Common myeloid progenitor, CD34-positive (primary cell): ENCODE measurements at regions of chr10 and their contacts with region 1.

Region 1: GRCh38 chr10:17375936-17376584 is 78.3 kb downstream of the ST8SIA6 start:
- DNase-seq: peak in 2 of 3 donors; percentile 19 to 20
- H3K4me3 ChIP-seq: no peak overlapping the region
- H3K27ac ChIP-seq: no peak overlapping the region
- H3K4me1 ChIP-seq: no peaks in the 10 kb centered on the region
- H3K27me3 ChIP-seq: no peaks in the 10 kb centered on the region

Region 2: DNA sequence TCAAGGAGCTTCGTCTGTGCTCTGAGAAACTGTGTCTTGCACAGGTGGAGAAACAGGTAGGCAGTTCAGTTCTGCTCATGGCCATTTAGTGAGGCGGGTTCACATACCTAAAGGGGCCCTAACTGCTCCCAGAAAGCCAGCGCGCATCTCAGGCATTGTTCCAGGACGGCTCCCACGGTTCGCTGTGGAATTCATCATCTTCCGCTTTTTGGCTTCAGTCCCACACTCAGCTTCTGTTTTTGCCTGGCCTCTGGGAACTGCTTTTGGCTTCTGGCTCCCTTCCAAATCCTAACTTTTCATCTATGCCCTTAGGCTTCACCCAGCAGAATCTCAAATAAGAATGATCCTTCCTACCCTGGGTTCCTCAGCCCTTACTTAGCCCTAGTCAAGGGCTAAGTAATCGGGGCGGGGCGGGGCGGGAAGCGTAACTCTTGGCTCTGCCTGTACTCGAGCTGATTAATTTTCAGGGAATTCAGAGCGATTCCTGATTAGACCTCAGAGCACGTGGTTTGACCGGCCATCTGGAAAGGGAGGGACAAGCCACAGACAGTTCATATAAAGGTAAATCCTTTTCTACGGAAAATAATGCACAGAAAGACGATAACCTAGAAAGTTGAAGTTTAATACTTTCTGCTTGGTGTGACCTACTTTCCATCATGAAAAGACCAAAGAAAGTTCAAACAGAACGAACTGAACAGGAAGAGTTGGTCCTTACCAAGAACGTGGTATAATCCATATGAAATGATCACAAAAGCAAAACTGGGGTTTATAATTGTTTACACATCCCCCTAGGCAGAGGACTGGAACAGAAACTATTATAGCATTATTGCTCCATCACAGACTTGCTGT is 27.3 kb before region 1 on chr10:
- CTCF ChIA-PET with region 1: no interaction called
- POLR2A ChIA-PET with region 1: no interaction called
- DNase-seq: no peak
- H3K4me3 ChIP-seq: no peak overlapping the region
- H3K27ac ChIP-seq: no peak overlapping the region
- H3K4me1 ChIP-seq: no peaks in the 10 kb centered on the region
- H3K27me3 ChIP-seq: no peaks in the 10 kb centered on the region

Region 3: DNA sequence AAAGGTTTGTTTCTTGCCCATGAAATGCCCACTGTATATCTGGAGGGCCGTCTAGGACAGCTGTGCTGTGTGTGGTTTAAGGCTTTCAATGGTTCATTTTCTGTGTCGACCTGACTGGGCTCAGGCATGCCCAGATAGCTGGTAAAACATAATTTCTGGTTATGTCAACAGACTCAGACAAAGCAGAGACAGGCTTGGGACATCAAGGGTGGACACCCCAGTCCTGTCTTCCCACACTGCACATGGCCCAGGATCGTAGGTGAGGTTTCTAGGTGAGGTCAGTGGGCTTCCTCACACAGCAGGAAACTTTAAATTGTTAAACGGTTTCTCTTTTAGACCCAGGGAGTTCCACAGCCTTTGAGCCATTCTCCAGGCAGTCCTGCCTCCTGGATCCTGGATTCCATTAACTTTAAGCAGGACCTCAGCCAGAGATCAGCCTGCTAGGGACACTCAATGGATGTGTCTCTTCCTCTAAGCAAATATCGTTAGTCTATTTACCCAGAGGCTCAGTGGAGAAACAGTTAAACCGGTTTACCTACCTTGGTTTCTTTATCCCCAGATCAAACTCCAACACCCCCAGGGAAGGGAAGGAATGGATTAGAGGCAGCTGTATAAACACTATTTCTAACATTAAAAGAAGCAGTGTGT is 11.9 kb after region 1 on chr10:
- CTCF ChIA-PET with region 1: interaction called, 11 read pairs
- POLR2A ChIA-PET with region 1: no interaction called
- DNase-seq: no peak
- H3K4me3 ChIP-seq: no peak overlapping the region
- H3K27ac ChIP-seq: peak overlapping the region in 1 of 2 experiments; percentile 19
- H3K4me1 ChIP-seq: no peaks in the 10 kb centered on the region
- H3K27me3 ChIP-seq: no peaks in the 10 kb centered on the region